Cardiac septum (tissue), 1 donor: ENCODE measurements at regions of chr9 and their contacts with region 1.

Region 1: GRCh38 chr9:97510797-97511761 is 9.6 kb downstream of the TMOD1 start:
- DNase-seq: no peak

Region 2: GRCh38 chr9:97564291-97565175 is 53.5 kb after region 1 on chr9:
- intact Hi-C with region 1: loop called (anchors 5 kb)
- DNase-seq: peak; percentile 73